ENCODE measurements at regions of chr20 and their contacts with region 1.

Region 1: DNA sequence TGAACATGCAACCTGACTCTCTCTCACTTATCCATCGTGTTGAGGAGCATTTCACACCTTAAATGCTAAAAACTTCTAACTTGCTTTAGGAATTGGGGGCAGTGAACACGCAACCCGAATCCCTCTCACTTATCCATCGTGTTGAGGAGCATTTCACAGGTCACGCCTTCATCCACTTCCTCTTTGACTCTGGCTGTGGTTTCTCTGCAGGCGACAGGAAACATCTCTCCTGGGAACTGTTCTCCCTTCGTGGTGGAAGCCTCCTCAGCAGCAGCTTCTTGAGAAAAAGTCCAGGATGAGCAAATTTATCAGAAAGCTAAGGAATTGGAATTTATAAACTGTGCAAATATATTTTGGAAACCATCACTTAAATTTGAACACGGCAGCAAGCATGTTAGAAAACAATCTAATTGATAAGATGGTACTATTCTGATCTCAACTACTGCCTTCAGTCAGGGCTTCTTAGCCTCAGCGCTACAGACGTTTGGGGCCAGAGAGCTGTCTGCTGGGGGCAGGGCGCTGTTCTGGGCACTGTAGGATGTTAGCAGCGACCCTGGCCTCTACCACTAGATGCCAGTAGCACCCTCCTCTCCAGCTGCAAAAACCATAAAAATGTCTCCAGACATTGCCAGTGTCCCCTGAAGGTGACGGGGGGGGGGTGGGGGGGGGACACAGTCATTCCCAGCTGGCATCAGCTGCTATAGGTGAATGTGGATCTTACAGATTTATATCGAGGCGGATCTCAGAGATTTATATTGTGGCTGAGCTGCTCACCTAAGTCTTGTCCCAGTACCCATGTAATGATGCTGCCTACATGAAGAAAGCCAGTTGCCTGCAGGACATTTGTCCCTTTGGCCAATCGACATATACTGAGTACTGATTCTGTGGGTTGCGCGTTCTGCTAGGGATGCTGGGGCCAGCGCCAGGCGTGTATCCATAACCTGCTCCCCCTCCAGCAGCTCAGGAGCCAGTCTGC is 26.2 kb downstream of the CTCFL start:
- DNase-seq: peak; percentile 67
- ATAC-seq: peak; percentile 70
- H3K4me3 ChIP-seq: no peak overlapping the region
- H3K4me3 Mint-ChIP-seq: no peak overlapping the region
- H3K27ac ChIP-seq: no peak overlapping the region
- H3K27ac Mint-ChIP-seq: no peak overlapping the region
- H3K4me1 ChIP-seq: peaks cover 30 to 39% of the 10 kb centered on the region in 2 donors
- H3K4me1 Mint-ChIP-seq: peaks cover 44% of the 10 kb centered on the region
- H3K27me3 ChIP-seq: peaks cover 0 to 3% (median 0%) of the 10 kb centered on the region in 4 experiments
- H3K27me3 Mint-ChIP-seq: peaks cover 9% of the 10 kb centered on the region
- CTCF ChIP-seq: peak; percentile 70

Region 2: GRCh38 chr20:57383447-57384347 is 115.0 kb before region 1 on chr20:
- CTCF ChIA-PET with region 1: interaction called, 56 read pairs
- POLR2A ChIA-PET with region 1: no interaction called
- intact Hi-C with region 1: loop called (anchors 1 kb)
- DNase-seq: no peak
- ATAC-seq: no peak
- H3K4me3 ChIP-seq: no peak overlapping the region
- H3K4me3 Mint-ChIP-seq: no peak overlapping the region
- H3K27ac ChIP-seq: no peak overlapping the region
- H3K27ac Mint-ChIP-seq: peak overlapping the region; percentile 10
- H3K4me1 ChIP-seq: peaks cover 2 to 8% of the 10 kb centered on the region in 2 donors
- H3K4me1 Mint-ChIP-seq: peaks cover 13% of the 10 kb centered on the region
- H3K27me3 ChIP-seq: no peaks in the 10 kb centered on the region
- H3K27me3 Mint-ChIP-seq: no peaks in the 10 kb centered on the region
- CTCF ChIP-seq: no peak

Region 3: DNA sequence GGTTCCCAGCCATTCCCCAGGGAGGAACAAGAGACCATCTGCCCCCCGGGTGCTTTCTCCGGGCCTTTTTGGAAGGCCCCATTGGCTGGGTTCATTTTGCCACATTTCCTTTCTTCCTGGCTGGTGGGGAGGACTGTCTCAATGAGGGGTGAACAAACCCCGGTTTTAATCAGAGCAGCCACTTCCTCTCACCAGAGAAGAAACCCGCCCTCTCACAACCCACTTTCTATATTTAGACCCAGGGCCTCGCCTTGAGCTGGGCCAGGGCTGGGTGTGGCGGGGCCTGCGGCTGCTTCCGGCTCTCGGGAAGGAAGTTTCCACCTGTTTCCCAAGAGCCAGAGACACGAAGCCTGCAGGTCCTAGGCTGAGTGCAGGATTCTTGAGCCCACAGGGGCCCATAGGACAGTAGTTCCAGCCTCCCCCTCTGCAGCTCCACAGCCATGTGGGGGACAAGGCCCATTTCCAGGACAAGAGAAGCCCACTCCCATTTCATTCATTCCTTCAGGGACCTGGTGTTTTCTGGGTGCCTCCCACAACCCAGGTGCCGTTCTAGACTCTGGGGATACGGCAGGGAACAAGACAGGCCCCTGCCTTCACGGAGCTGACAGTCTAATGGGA is 65.7 kb before region 1 on chr20:
- CTCF ChIA-PET with region 1: interaction called, 9 read pairs
- POLR2A ChIA-PET with region 1: no interaction called
- intact Hi-C with region 1: loop called (anchors 1 kb)
- DNase-seq: peak; percentile 83
- ATAC-seq: peak; percentile 72
- H3K4me3 ChIP-seq: peak overlapping the region in 4 of 5 experiments; percentile 7 to 25 (median 18)
- H3K4me3 Mint-ChIP-seq: peak overlapping the region; percentile 56
- H3K27ac ChIP-seq: peak overlapping the region; percentile 87 to 93
- H3K27ac Mint-ChIP-seq: peak overlapping the region; percentile 89
- H3K4me1 ChIP-seq: peaks cover 76 to 85% of the 10 kb centered on the region in 2 donors
- H3K4me1 Mint-ChIP-seq: peaks cover 81% of the 10 kb centered on the region
- H3K27me3 ChIP-seq: no peaks in the 10 kb centered on the region
- H3K27me3 Mint-ChIP-seq: no peaks in the 10 kb centered on the region
- CTCF ChIP-seq: no peak

Region 4: DNA sequence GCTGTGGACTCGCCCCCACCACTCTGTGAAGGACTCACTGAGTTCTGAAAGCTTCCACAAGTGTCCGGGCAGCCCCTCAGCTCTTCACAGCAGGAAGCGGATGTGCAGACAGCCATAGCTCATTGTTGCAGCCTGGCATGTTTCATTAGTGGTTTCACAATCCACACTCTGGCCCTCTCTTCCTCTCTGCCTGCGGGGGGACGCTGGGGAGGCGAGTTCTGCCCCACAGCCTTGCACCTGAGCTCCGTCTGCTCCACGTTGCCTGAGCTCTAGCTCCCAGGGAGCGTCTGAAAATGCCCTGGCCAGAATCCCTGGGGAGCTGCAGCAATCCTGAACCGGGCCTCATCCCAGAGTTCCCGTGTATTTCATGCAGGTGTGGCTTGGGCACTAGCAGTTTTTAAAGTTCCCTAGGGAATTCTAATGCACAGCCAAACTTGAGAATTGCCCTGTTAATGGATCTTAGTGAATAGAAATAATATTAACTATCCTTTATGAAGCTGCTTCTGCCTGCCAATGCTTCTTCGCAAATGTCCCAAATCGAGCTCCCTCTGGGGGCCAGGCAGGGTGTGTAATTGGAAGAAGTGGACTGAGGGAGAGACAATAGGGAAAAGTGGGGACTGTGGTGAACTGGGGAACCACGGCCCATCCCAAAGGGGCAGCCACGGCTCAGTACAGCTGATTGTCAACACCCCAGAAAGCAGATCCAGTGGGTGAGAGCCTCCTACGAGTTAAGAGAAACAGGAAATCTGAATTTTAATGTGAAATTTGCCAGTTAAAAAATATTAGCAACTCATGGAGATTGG is 25.3 kb before region 1 on chr20:
- CTCF ChIA-PET with region 1: interaction called, 11 read pairs
- POLR2A ChIA-PET with region 1: no interaction called
- intact Hi-C with region 1: no loop called
- DNase-seq: peak; percentile 69
- ATAC-seq: peak; percentile 52
- H3K4me3 ChIP-seq: peak overlapping the region in 2 of 5 experiments; percentile 19 to 37
- H3K4me3 Mint-ChIP-seq: peak overlapping the region; percentile 65
- H3K27ac ChIP-seq: peak overlapping the region in 1 of 2 donors; percentile 2
- H3K27ac Mint-ChIP-seq: peak overlapping the region; percentile 61
- H3K4me1 ChIP-seq: peaks cover 72 to 84% of the 10 kb centered on the region in 2 donors
- H3K4me1 Mint-ChIP-seq: peaks cover 86% of the 10 kb centered on the region
- H3K27me3 ChIP-seq: no peaks in the 10 kb centered on the region
- H3K27me3 Mint-ChIP-seq: peaks cover 4% of the 10 kb centered on the region
- CTCF ChIP-seq: no peak

Region 5: DNA sequence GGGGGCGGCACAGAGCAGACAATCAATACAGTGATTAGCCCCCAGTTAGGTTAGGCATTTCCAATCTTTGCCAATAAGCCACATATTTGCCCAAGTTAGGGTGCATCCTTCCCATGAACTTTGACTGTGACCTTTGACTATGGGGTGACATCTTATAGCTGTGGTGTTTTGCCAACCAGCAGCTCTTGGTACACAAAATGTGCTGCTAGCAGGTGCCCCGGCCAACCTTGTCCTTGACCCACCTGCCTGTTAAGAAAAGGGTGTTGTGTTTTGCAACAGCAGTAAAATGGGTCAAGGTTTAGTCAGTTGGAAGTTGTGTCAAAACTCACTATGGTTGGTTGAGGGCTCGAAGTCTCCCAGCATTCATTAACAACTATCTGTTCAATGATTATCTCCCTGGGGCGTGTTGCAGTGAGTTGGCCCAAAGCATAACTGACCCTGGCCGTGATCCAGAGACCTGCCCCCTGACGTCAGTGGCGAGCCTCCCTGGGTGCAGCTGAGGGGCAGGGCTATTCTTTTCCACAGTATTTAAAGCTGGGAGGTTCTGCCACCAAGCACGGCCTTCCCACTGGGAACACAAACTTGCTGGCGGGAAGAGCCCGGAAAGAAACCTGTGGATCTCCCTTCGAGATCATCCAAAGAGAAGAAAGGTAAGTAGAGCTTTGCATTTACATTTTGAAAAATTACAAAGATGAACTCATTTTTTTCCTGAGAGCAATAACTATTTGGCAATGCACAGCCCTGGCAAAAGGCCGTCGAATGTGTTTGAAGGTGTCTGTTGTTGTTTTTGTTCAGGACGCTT is 62.0 kb after region 1 on chr20 and contains the start of gene PCK1:
- CTCF ChIA-PET with region 1: no interaction called
- POLR2A ChIA-PET with region 1: no interaction called
- intact Hi-C with region 1: no loop called
- DNase-seq: no peak
- ATAC-seq: no peak
- H3K4me3 ChIP-seq: no peak within 1 kb of the TSS
- H3K4me3 Mint-ChIP-seq: no peak within 1 kb of the TSS
- H3K27ac ChIP-seq: no peak within 1 kb of the TSS
- H3K27ac Mint-ChIP-seq: no peak within 1 kb of the TSS
- H3K4me1 ChIP-seq: no peaks in the 10 kb centered on the region
- H3K4me1 Mint-ChIP-seq: no peaks in the 10 kb centered on the region
- H3K27me3 ChIP-seq: peaks cover 0 to 4% (median 3%) of the 10 kb centered on the region in 4 experiments
- H3K27me3 Mint-ChIP-seq: peaks cover 35% of the 10 kb centered on the region
- CTCF ChIP-seq: no peak
- total RNA-seq, gene PCK1: not detected in 2 replicates

Region 6: GRCh38 chr20:57622579-57623377 is 124.1 kb after region 1 on chr20:
- CTCF ChIA-PET with region 1: interaction called, 3 read pairs
- POLR2A ChIA-PET with region 1: no interaction called
- intact Hi-C with region 1: loop called (anchors 10 kb)
- DNase-seq: peak; percentile 69
- ATAC-seq: no peak
- H3K4me3 ChIP-seq: no peak overlapping the region
- H3K4me3 Mint-ChIP-seq: peak overlapping the region; percentile 13
- H3K27ac ChIP-seq: no peak overlapping the region
- H3K27ac Mint-ChIP-seq: peak overlapping the region; percentile 80
- H3K4me1 ChIP-seq: peaks cover 54 to 59% of the 10 kb centered on the region in 2 donors
- H3K4me1 Mint-ChIP-seq: peaks cover 65% of the 10 kb centered on the region
- H3K27me3 ChIP-seq: no peaks in the 10 kb centered on the region
- H3K27me3 Mint-ChIP-seq: no peaks in the 10 kb centered on the region
- CTCF ChIP-seq: peak; percentile 82

Measured in B cell (primary cell).